Naive thymus-derived CD8-positive, alpha-beta T cell (primary cell): ENCODE measurements at regions of chr1 and their contacts with region 1.

Region 1: GRCh38 chr1:42846257-42847110 is at the start of gene ZNF691:
- DNase-seq: peak; percentile 70 to 95 (median 86)
- ATAC-seq: peak; percentile 98 to 99
- H3K4me3 Mint-ChIP-seq: peak within 1 kb of the TSS; percentile 86 to 100 (median 96)
- H3K27ac Mint-ChIP-seq: peak within 1 kb of the TSS; percentile 18 to 94 (median 92)
- H3K4me1 Mint-ChIP-seq: peaks cover 29 to 40% (median 33%) of the 10 kb centered on the region in 4 donors
- H3K27me3 Mint-ChIP-seq: no peaks in the 10 kb centered on the region
- polyA plus RNA-seq, gene ZNF691: 8.5 to 9.7 (median 8.8) TPM

Region 2: GRCh38 chr1:42816585-42817434 is 29.7 kb before region 1 on chr1 and contains the starts of genes ERMAP and SVBP:
- POLR2A ChIA-PET with region 1: interaction called, 23 read pairs
- DNase-seq: peak; percentile 83 to 98 (median 93)
- ATAC-seq: peak; percentile 84 to 87
- H3K4me3 Mint-ChIP-seq: peak within 1 kb of the TSS; percentile 73 to 90 (median 86)
- H3K27ac Mint-ChIP-seq: peak within 1 kb of the TSS; percentile 79 to 95 (median 88)
- H3K4me1 Mint-ChIP-seq: peaks cover 20 to 25% (median 23%) of the 10 kb centered on the region in 4 donors
- H3K27me3 Mint-ChIP-seq: no peaks in the 10 kb centered on the region
- polyA plus RNA-seq, gene ERMAP: 1.1 to 2.9 (median 2.7) TPM
- polyA plus RNA-seq, gene SVBP: 36.2 to 54.6 (median 46.0) TPM

Region 3: GRCh38 chr1:42886800-42887199 is 40.3 kb after region 1 on chr1:
- POLR2A ChIA-PET with region 1: no interaction called
- DNase-seq: peak in 1 of 10 donors; percentile 3
- ATAC-seq: no peak
- H3K4me3 Mint-ChIP-seq: no peak overlapping the region
- H3K27ac Mint-ChIP-seq: no peak overlapping the region
- H3K4me1 Mint-ChIP-seq: peaks cover 0 to 5% (median 0%) of the 10 kb centered on the region in 4 donors
- H3K27me3 Mint-ChIP-seq: peaks cover 0 to 10% (median 3%) of the 10 kb centered on the region in 5 donors